Activated CD8-positive, alpha-beta memory T cell treated with anti-CD3 and anti-CD28 coated beads, Interleukin-2, amount 10 ng/mL, durations not matched to agents 7 days and 5 days (primary cell): ENCODE measurements at regions of chr15 and their contacts with region 1.

Region 1: DNA sequence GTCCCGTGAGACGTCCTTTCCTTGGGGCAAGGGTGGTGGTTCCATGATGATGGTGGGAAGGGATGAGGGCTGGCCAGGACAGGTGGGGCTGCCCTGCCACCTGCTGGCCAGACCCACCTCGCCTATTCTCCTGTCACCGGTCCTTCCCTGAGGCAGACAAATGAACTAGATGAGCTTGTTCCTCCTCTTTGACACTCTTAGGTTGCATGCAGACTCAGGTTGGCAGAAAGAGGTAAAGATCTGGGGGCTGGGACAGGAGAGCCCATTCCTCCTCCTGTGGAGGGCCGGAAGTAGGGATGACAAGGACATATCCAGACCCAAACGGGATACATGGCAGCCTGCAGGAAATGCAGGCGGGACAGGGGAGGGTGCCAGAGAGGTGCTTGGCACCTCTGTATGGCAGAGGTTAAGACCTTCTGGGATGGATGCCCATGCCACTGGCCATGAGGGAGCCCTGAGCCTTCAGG is 38.6 kb downstream of the ACSBG1 start:
- DNase-seq: peak; percentile 61
- ATAC-seq: peak; percentile 89
- H3K4me3 Mint-ChIP-seq: no peak overlapping the region
- H3K27ac Mint-ChIP-seq: no peak overlapping the region
- H3K4me1 Mint-ChIP-seq: no peaks in the 10 kb centered on the region
- H3K27me3 Mint-ChIP-seq: peaks cover 11% of the 10 kb centered on the region

Region 2: GRCh38 chr15:77966540-77967290 is 229.1 kb before region 1 on chr15:
- CTCF ChIA-PET with region 1: interaction called, 16 read pairs
- DNase-seq: peak; percentile 63
- ATAC-seq: peak; percentile 75
- H3K4me3 Mint-ChIP-seq: no peak overlapping the region
- H3K27ac Mint-ChIP-seq: no peak overlapping the region
- H3K4me1 Mint-ChIP-seq: peaks cover 20% of the 10 kb centered on the region
- H3K27me3 Mint-ChIP-seq: peaks cover 25% of the 10 kb centered on the region

Region 3: DNA sequence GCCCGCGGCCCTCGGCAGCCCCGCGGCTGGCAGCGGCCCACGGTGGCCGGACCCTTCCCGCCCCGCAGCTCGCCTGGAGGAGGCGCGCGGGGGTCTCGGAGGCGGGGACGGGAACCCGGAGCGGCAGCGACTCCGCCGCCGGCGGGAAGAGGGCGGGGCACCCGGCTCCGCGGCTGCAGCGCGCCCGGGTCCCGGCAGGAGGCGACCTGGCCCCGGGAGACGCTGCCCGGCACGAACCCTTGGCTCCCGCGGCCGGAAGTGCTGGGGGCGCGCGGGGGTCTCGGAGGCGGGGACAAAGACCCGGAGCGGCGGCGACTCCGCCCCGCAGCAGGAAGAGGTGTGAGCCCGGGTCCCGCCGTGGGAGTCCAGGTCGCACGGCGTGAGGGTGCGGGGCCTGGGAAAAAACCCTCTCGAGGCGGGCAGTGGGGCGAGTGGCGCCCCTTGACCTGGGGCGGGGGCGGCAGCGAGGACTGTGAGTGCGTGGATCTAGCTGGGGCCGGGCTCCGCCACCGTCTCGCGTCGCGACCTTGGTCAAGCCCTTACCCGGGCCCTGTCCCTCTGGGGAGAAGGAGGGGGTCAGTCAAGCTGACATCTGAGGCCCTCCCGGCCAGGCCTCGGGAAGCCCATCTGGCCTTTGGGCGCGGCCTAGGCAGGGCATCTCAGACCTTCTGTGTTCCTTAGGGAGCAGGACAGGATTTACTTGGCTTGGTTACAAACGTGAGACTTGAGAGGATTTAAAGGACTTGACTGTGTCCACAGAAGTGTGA is 64.3 kb before region 1 on chr15 and contains the start of gene CIB2:
- CTCF ChIA-PET with region 1: interaction called, 120 read pairs
- DNase-seq: peak; percentile 82
- ATAC-seq: peak; percentile 93
- H3K4me3 Mint-ChIP-seq: peak within 1 kb of the TSS; percentile 77
- H3K27ac Mint-ChIP-seq: peak within 1 kb of the TSS; percentile 74
- H3K4me1 Mint-ChIP-seq: peaks cover 16% of the 10 kb centered on the region
- H3K27me3 Mint-ChIP-seq: no peaks in the 10 kb centered on the region
- total RNA-seq, gene CIB2: 0.94 to 1.2 TPM

Region 4: DNA sequence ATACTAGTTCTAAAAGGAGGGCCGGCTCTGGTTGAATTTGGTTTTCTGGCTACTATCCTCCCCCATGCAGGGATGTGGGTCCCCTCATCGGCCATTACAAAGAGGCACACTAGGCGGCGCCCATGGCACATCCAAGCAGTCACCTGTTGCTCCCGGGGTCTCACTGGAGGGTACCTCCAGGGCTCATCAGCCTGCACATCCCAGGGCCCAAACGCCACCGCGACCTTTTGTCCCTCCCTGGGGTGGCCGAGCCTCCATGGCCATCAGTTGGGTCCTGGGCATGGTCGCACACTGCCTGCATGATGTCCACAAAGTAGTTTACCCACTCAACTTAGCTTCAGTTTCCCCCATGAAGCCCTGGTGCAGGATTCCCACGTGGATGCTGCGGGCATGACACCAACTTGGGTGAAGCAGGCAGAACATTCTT is 18.3 kb before region 1 on chr15:
- CTCF ChIA-PET with region 1: interaction called, 59 read pairs
- DNase-seq: peak; percentile 68
- ATAC-seq: peak; percentile 62
- H3K4me3 Mint-ChIP-seq: no peak overlapping the region
- H3K27ac Mint-ChIP-seq: no peak overlapping the region
- H3K4me1 Mint-ChIP-seq: peaks cover 23% of the 10 kb centered on the region
- H3K27me3 Mint-ChIP-seq: no peaks in the 10 kb centered on the region

Region 5: DNA sequence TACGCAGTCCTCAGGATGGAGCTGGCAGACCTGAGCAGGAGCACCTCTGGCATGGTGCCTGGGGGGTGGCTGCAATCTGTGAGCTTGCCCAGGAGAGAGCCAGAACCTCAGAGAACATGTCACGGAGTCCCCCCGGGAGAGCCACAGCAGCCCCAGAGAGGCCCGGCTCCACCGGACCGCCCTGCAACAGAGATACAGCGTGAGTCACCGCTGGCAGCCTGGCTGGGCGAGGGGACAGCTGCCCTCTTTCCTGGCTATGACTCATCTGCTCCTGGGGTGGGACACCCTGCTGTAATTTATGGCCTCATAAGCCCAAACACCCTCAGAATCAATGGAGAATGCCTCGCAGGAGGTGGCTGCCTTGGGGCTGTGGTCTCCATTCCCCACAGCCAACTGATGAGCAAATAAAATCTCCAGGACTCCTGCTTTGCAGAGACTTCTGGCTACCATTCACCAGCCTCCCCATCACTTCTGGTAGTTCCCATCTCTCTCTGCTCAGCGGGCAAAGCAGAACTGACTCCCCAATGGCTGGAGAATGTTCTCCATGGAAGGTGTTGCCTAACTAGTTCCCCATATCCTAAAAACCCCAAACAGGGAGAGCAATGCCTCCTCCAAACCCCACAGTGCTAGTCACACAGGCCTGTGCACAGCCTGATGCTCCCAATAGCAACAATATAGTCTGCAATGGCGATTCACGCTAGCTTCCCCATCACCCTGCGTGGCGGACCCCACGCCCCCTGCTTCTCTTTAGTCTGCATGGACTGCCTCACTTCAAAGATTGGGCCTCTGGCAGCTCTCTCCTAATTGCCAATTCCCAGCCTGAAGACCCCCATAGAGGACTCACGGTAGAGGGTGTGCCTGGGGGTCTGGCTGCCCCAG is 17.0 kb after region 1 on chr15:
- CTCF ChIA-PET with region 1: interaction called, 21 read pairs
- DNase-seq: no peak
- ATAC-seq: no peak
- H3K4me3 Mint-ChIP-seq: no peak overlapping the region
- H3K27ac Mint-ChIP-seq: no peak overlapping the region
- H3K4me1 Mint-ChIP-seq: peaks cover 1% of the 10 kb centered on the region
- H3K27me3 Mint-ChIP-seq: peaks cover 23% of the 10 kb centered on the region

Region 6: DNA sequence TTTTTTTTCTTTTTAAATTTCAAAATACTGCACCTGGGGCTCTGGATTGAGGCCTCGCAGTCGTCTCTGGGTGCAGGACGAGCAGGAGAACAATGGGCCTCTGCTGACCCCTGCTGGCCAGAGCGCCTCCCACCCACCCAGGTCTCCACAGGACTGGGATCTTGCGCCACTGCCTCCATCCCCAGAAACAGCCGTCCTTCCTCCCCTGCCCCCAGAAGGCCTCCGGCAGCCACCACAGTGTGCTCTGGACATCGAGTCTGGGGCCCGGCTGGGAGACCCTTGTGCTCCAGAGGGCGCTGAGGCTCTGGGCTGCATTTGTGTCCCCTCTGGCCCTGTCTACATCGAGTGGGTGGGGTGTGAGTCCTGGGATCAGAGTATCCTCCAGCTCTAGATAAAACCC is 45.2 kb after region 1 on chr15:
- CTCF ChIA-PET with region 1: interaction called, 66 read pairs
- DNase-seq: peak; percentile 90
- ATAC-seq: peak; percentile 95
- H3K4me3 Mint-ChIP-seq: no peak overlapping the region
- H3K27ac Mint-ChIP-seq: no peak overlapping the region
- H3K4me1 Mint-ChIP-seq: peaks cover 3% of the 10 kb centered on the region
- H3K27me3 Mint-ChIP-seq: peaks cover 16% of the 10 kb centered on the region